ENCODE measurements at regions of chr13 and their contacts with region 1.

Region 1: DNA sequence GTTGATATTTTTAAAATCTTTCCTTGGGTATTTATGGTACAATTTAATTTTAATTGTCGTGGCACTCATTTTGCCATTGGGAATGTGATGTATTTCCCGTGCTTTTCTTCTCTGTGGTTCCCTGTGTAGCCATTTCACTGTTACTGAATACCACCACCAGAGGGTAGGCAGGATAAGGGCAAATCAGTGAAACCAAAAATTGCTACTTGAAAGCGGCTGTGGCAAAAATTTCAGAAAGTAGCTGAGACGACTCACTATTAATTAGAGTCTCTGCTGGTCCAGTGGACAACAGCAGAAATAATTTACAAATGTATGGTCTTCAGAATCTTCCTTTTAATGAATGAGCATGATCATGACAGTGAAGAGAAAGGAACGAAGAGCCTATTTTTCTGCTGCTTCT is 34.4 kb upstream of the MIR17HG start:
- DNase-seq: peak; percentile 22 to 41 (median 31)
- H3K4me3 ChIP-seq: no peak overlapping the region
- H3K4me3 Mint-ChIP-seq: peak overlapping the region in 1 of 8 donors; percentile 39
- H3K27ac ChIP-seq: no peak overlapping the region
- H3K27ac Mint-ChIP-seq: no peak overlapping the region
- H3K4me1 ChIP-seq: no peaks in the 10 kb centered on the region
- H3K4me1 Mint-ChIP-seq: peaks cover 2 to 8% (median 5%) of the 10 kb centered on the region in 4 donors
- H3K27me3 ChIP-seq: no peaks in the 10 kb centered on the region
- H3K27me3 Mint-ChIP-seq: peaks cover 10 to 14% of the 10 kb centered on the region in 2 donors

Region 2: DNA sequence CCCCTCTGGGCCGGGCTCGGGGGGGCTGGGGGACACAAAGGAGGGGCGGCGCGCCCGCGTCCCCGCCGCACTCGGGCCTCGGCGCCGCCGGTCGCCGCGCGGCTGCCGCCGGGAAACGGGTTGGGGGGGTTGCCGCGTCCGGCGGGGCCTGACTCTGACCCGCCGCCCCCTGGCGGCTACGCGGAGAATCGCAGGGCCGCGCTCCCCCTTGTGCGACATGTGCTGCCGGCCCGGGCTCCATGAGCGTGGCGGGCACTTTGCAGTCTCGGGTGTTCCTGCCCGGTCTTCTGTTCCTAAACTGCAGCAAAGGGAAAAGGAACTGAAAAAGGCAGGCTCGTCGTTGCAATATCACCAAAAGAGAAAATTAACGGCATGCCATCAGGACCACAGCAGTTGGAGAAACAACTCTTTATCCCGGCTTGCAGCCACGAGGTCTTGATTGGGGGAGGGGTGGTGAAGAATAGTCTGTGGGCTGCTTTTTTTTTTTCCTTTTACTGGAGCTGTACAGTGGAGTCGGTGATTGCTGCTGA is 35.9 kb after region 1 on chr13:
- CTCF ChIA-PET with region 1: interaction called, 11 read pairs
- POLR2A ChIA-PET with region 1: interaction called, 5 read pairs
- intact Hi-C with region 1: loop called (anchors 1 kb)
- DNase-seq: peak; percentile 86 to 93 (median 88)
- H3K4me3 ChIP-seq: peak overlapping the region; percentile 39 to 74
- H3K4me3 Mint-ChIP-seq: peak overlapping the region; percentile 87 to 97 (median 92)
- H3K27ac ChIP-seq: peak overlapping the region; percentile 64
- H3K27ac Mint-ChIP-seq: peak overlapping the region; percentile 90 to 95 (median 93)
- H3K4me1 ChIP-seq: peaks cover 39% of the 10 kb centered on the region
- H3K4me1 Mint-ChIP-seq: peaks cover 20 to 45% (median 25%) of the 10 kb centered on the region in 4 donors
- H3K27me3 ChIP-seq: no peaks in the 10 kb centered on the region
- H3K27me3 Mint-ChIP-seq: peaks cover 0 to 4% of the 10 kb centered on the region in 2 donors

Region 3: GRCh38 chr13:91398413-91399272 is 85.5 kb after region 1 on chr13 and contains the start of gene GPC5:
- CTCF ChIA-PET with region 1: no interaction called
- POLR2A ChIA-PET with region 1: no interaction called
- intact Hi-C with region 1: loop called (anchors 2 kb)
- DNase-seq: peak; percentile 74 to 81 (median 79)
- H3K4me3 ChIP-seq: peak within 1 kb of the TSS in 1 of 2 donors; percentile 46
- H3K4me3 Mint-ChIP-seq: peak within 1 kb of the TSS; percentile 71 to 90 (median 80)
- H3K27ac ChIP-seq: no peak within 1 kb of the TSS
- H3K27ac Mint-ChIP-seq: peak within 1 kb of the TSS in 2 of 7 donors; percentile 5 to 42
- H3K4me1 ChIP-seq: peaks cover 17% of the 10 kb centered on the region
- H3K4me1 Mint-ChIP-seq: peaks cover 7 to 17% (median 14%) of the 10 kb centered on the region in 4 donors
- H3K27me3 ChIP-seq: peaks cover 12% of the 10 kb centered on the region
- H3K27me3 Mint-ChIP-seq: peaks cover 24 to 25% of the 10 kb centered on the region in 2 donors
- total RNA-seq, gene GPC5: 0.14 TPM in 1 of 2 experiments, not detected in the other

Region 4: DNA sequence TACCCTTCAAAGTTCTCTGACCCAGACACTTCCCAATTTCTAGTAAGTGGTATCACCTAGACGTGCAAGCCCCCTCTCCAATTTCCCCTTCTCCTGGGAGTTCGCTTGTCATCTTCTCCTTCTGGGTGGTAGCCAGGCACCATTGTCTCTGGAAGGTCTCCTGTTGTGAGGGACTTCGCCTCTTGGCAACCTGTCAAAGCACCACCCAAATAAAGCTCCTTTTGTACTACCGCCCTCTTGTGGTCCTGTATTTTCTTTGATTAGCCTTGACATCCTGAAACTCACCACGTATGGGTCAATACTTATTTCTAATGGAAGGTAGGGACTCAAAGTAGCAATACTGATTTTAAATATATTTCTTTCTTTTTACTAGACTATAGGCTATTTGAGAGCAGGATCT is 93.5 kb after region 1 on chr13:
- CTCF ChIA-PET with region 1: interaction called, 5 read pairs
- POLR2A ChIA-PET with region 1: no interaction called
- intact Hi-C with region 1: loop called (anchors 1 kb)
- DNase-seq: peak; percentile 19 to 24 (median 22)
- H3K4me3 ChIP-seq: no peak overlapping the region
- H3K4me3 Mint-ChIP-seq: no peak overlapping the region
- H3K27ac ChIP-seq: no peak overlapping the region
- H3K27ac Mint-ChIP-seq: no peak overlapping the region
- H3K4me1 ChIP-seq: no peaks in the 10 kb centered on the region
- H3K4me1 Mint-ChIP-seq: peaks cover 0 to 2% (median 0%) of the 10 kb centered on the region in 4 donors
- H3K27me3 ChIP-seq: peaks cover 3% of the 10 kb centered on the region
- H3K27me3 Mint-ChIP-seq: peaks cover 10 to 15% of the 10 kb centered on the region in 2 donors

Region 5: GRCh38 chr13:91459485-91459884 is 146.4 kb after region 1 on chr13:
- CTCF ChIA-PET with region 1: interaction called, 3 read pairs
- POLR2A ChIA-PET with region 1: no interaction called
- intact Hi-C with region 1: loop called (anchors 10 kb)
- DNase-seq: no peak
- H3K4me3 ChIP-seq: no peak overlapping the region
- H3K4me3 Mint-ChIP-seq: no peak overlapping the region
- H3K27ac ChIP-seq: no peak overlapping the region
- H3K27ac Mint-ChIP-seq: no peak overlapping the region
- H3K4me1 ChIP-seq: no peaks in the 10 kb centered on the region
- H3K4me1 Mint-ChIP-seq: no peaks in the 10 kb centered on the region
- H3K27me3 ChIP-seq: no peaks in the 10 kb centered on the region
- H3K27me3 Mint-ChIP-seq: peaks cover 6 to 9% of the 10 kb centered on the region in 2 donors

Region 6: DNA sequence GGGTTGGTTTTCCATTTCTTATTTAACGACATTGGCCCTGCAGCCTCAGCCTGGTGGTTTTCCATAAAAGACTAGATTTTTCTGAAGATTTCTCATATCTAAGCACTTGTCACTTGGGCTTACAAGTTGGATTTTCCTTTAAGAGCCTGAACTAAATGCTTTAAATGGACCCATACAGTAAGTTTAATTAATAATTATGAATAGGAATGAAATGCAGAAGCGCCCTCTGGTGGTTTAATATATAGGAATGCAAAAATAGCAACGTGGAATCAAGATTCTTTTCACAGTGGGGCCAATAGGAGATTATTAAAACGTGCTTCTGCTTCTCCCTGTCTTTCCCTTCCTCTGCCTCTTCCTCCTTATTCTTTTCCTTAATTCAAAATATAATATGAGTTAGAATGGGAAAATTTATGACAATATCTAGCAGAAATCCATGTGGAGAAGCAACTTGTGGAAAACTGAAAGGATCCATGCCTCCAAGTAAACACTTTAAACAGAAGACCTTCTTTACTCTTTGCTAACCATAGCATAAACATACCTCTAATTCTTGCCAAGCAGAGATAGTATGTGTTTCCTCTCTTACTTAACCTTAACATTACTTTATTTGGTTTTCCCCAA is 409.3 kb after region 1 on chr13:
- CTCF ChIA-PET with region 1: interaction called, 11 read pairs
- POLR2A ChIA-PET with region 1: no interaction called
- intact Hi-C with region 1: no loop called
- DNase-seq: peak in 4 of 5 donors; percentile 1 to 15 (median 10)
- H3K4me3 ChIP-seq: no peak overlapping the region
- H3K4me3 Mint-ChIP-seq: no peak overlapping the region
- H3K27ac ChIP-seq: no peak overlapping the region
- H3K27ac Mint-ChIP-seq: no peak overlapping the region
- H3K4me1 ChIP-seq: no peaks in the 10 kb centered on the region
- H3K4me1 Mint-ChIP-seq: no peaks in the 10 kb centered on the region
- H3K27me3 ChIP-seq: no peaks in the 10 kb centered on the region
- H3K27me3 Mint-ChIP-seq: no peaks in the 10 kb centered on the region